ENCODE measurements at regions of chr14 and their contacts with region 1.

Region 1: DNA sequence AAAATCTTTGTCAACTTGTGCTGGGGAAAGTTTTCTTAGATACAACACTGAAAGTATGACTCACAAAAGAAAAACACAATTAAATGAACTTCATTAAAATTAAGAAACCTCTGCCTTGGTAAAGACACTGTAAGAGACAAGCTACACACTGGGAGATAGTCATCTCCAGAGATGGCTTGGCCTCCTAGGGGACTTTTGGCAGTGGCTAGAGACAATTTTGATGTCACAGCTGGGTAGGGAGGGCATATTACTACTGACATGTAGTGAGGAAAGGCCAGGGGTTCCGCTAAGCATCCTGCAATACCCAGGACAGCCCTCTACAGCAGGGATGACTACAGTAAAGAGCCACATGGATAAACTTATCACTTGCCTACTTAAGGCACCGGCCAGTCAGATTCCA is 8.7 kb upstream of the RNASE4 start:
- DNase-seq: no peak
- H3K4me3 ChIP-seq: no peak overlapping the region
- H3K4me3 Mint-ChIP-seq: no peak overlapping the region
- H3K27ac ChIP-seq: no peak overlapping the region
- H3K27ac Mint-ChIP-seq: no peak overlapping the region
- H3K4me1 ChIP-seq: peaks cover 12% of the 10 kb centered on the region
- H3K4me1 Mint-ChIP-seq: no peaks in the 10 kb centered on the region
- H3K27me3 ChIP-seq: peaks cover 3% of the 10 kb centered on the region
- H3K27me3 Mint-ChIP-seq: no peaks in the 10 kb centered on the region

Region 2: DNA sequence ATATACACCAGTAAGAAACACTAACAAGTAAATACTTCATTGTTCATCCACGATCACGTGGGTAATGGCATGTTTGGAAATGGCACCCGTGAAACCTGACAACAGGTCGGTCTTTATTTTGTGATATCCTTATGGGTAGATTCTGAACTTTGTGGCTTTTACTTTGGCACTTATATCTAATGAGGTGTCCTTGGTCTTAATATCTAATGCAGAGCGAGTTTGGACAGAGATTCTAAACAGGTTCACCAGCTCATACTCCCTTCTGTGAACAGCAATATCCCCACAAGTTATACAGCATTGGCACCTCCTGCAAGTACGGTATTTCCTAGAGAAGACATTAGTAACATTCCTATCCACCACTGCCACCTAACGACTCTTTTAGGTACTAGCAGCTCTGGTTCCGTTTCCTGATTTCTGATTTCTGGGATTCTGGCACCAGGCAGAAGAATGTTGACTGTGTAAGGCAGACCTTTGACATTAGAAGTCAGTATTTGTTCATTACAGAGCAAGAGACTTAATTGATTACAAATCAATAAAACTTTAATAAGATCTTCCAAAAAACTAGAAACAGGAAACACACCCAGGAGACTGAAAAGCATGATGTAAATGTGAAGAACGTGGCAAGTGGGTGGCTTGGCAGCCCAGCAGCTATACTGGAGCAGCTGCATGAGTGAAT is 15.3 kb after region 1 on chr14:
- CTCF ChIA-PET with region 1: interaction called, 33 read pairs
- POLR2A ChIA-PET with region 1: interaction called, 5 read pairs
- DNase-seq: peak in 4 of 5 donors; percentile 18 to 65 (median 54)
- H3K4me3 ChIP-seq: no peak overlapping the region
- H3K4me3 Mint-ChIP-seq: peak overlapping the region in 1 of 7 donors; percentile 7
- H3K27ac ChIP-seq: no peak overlapping the region
- H3K27ac Mint-ChIP-seq: peak overlapping the region in 1 of 8 donors; percentile 12
- H3K4me1 ChIP-seq: no peaks in the 10 kb centered on the region
- H3K4me1 Mint-ChIP-seq: peaks cover 4 to 6% (median 5%) of the 10 kb centered on the region in 3 donors
- H3K27me3 ChIP-seq: no peaks in the 10 kb centered on the region
- H3K27me3 Mint-ChIP-seq: peaks cover 7 to 8% of the 10 kb centered on the region in 2 donors

Region 3: GRCh38 chr14:20811986-20812975 is 136.6 kb after region 1 on chr14:
- CTCF ChIA-PET with region 1: no interaction called
- POLR2A ChIA-PET with region 1: no interaction called
- DNase-seq: no peak
- H3K4me3 ChIP-seq: no peak overlapping the region
- H3K4me3 Mint-ChIP-seq: no peak overlapping the region
- H3K27ac ChIP-seq: no peak overlapping the region
- H3K27ac Mint-ChIP-seq: peak overlapping the region in 1 of 8 donors; percentile 41
- H3K4me1 ChIP-seq: no peaks in the 10 kb centered on the region
- H3K4me1 Mint-ChIP-seq: no peaks in the 10 kb centered on the region
- H3K27me3 ChIP-seq: no peaks in the 10 kb centered on the region
- H3K27me3 Mint-ChIP-seq: peaks cover 6 to 18% of the 10 kb centered on the region in 2 donors

Measured in CD8-positive, alpha-beta memory T cell (primary cell).